Activated CD8-positive, alpha-beta T cell treated with anti-CD3 and anti-CD28 coated beads for 36 hours (primary cell): ENCODE measurements at regions of chr10 and their contacts with region 1.

Region 1: GRCh38 chr10:73772280-73773151 is 9.3 kb upstream of the CHCHD1 start:
- DNase-seq: peak; percentile 84
- ATAC-seq: peak; percentile 75
- H3K4me3 Mint-ChIP-seq: peak overlapping the region; percentile 89
- H3K27ac Mint-ChIP-seq: peak overlapping the region; percentile 95
- H3K4me1 Mint-ChIP-seq: peaks cover 38% of the 10 kb centered on the region
- H3K27me3 Mint-ChIP-seq: no peaks in the 10 kb centered on the region
- CTCF ChIP-seq: no peak

Region 2: DNA sequence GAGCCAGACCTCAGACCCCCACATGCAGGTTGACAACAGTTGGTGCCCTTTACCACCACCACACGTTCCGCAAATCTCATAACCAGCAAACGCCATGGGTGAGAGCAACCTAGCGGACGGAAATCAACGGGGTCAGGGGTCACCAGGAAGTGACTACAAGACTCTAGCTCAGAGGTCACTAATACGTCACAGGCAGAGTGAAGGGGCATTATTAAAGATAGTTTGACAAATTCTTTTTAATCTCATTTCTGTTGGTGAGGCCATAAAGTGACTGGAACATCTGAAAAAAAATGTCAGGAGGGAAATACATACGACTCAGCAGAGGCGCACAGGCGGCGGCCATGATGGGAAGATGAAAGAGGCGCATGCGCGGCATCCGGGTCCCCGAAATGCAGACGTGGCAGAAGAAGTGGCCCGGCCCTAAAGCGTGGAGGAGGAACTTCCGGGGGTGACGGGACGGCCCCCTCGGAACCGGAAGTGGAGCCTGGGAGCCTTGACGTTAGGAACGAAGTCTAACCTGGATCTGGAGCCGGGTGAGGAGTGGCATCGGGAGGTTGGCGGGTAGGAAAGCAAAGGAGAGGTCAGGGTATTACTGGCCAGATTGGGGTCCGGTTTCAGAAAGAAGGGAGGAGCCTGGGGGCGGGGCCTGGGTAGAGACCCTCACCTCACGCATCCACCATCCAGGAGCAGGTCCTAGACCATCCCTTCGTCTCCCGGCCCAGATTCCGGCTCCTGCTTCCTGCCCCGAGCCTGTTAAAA is 28.4 kb before region 1 on chr10 and contains the start of gene SEC24C:
- CTCF ChIA-PET with region 1: interaction called, 9 read pairs
- POLR2A ChIA-PET with region 1: interaction called, 24 read pairs
- intact Hi-C with region 1: no loop called
- DNase-seq: peak; percentile 97
- ATAC-seq: peak; percentile 91
- H3K4me3 Mint-ChIP-seq: peak within 1 kb of the TSS; percentile 97
- H3K27ac Mint-ChIP-seq: peak within 1 kb of the TSS; percentile 100
- H3K4me1 Mint-ChIP-seq: peaks cover 36% of the 10 kb centered on the region
- H3K27me3 Mint-ChIP-seq: no peaks in the 10 kb centered on the region
- CTCF ChIP-seq: no peak
- total RNA-seq, gene SEC24C: 87.5 to 88.7 TPM

Region 3: DNA sequence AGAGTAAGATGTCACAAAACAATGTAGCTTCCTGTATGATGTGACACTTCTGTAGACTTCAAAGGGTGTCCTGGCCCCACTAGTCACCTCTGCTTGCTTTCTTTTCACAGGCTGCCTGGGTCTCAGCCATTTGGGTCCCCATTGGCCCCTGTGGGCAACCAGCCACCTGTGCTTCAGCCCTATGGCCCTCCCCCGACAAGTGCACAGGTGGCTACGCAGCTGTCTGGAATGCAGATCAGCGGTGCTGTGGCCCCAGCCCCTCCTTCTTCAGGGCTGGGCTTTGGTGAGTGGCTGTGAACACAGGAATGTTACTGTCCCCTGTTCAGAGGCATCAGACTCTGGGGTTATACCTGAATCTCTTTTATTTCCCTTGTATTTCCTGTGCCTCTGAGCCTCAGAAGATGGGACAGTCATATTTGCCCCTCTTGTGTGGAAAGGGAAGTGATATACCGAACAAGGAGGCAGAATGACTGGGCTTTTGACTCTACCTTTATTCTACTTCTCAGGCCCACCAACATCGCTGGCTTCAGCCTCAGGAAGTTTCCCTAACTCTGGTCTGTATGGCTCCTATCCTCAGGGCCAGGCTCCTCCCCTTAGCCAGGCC is 12.9 kb before region 1 on chr10:
- CTCF ChIA-PET with region 1: interaction called, 14 read pairs
- POLR2A ChIA-PET with region 1: interaction called, 30 read pairs
- intact Hi-C with region 1: no loop called
- DNase-seq: peak; percentile 70
- ATAC-seq: peak; percentile 81
- H3K4me3 Mint-ChIP-seq: peak overlapping the region; percentile 20
- H3K27ac Mint-ChIP-seq: peak overlapping the region; percentile 87
- H3K4me1 Mint-ChIP-seq: peaks cover 53% of the 10 kb centered on the region
- H3K27me3 Mint-ChIP-seq: no peaks in the 10 kb centered on the region
- CTCF ChIP-seq: no peak